ENCODE measurements at regions of chr15 and their contacts with region 1.

Region 1: GRCh38 chr15:66386204-66387123 is at the start of gene MAP2K1:
- DNase-seq: peak; percentile 95
- H3K4me3 ChIP-seq: peak within 1 kb of the TSS; percentile 80 to 98 (median 94)
- H3K27ac ChIP-seq: peak within 1 kb of the TSS; percentile 89
- H3K4me1 ChIP-seq: peaks cover 28% of the 10 kb centered on the region
- H3K27me3 ChIP-seq: no peaks in the 10 kb centered on the region
- CTCF ChIP-seq: peak; percentile 15 to 68
- total RNA-seq, gene MAP2K1: 29.8 to 104 TPM

Region 2: GRCh38 chr15:66293419-66294156 is 92.9 kb before region 1 on chr15 and contains the start of gene DIS3L:
- CTCF ChIA-PET with region 1: no interaction called
- dilution Hi-C with region 1: no loop called
- in situ Hi-C with region 1: no loop called
- intact Hi-C with region 1: loop called (anchors 1 kb)
- DNase-seq: peak; percentile 55
- H3K4me3 ChIP-seq: peak within 1 kb of the TSS; percentile 55 to 86 (median 63)
- H3K27ac ChIP-seq: peak within 1 kb of the TSS; percentile 57
- H3K4me1 ChIP-seq: peaks cover 30% of the 10 kb centered on the region
- H3K27me3 ChIP-seq: no peaks in the 10 kb centered on the region
- CTCF ChIP-seq: no peak
- total RNA-seq, gene DIS3L: 17.7 to 22.1 TPM

Region 3: GRCh38 chr15:66356345-66357236 is 29.9 kb before region 1 on chr15 and contains the start of gene TIPIN:
- CTCF ChIA-PET with region 1: no interaction called
- dilution Hi-C with region 1: no loop called
- in situ Hi-C with region 1: no loop called
- intact Hi-C with region 1: loop called (anchors 2 kb)
- DNase-seq: peak; percentile 92
- H3K4me3 ChIP-seq: peak within 1 kb of the TSS; percentile 62 to 82 (median 63)
- H3K27ac ChIP-seq: peak within 1 kb of the TSS; percentile 78
- H3K4me1 ChIP-seq: peaks cover 9% of the 10 kb centered on the region
- H3K27me3 ChIP-seq: no peaks in the 10 kb centered on the region
- CTCF ChIP-seq: no peak
- total RNA-seq, gene TIPIN: 7.7 to 18.1 TPM

Region 4: DNA sequence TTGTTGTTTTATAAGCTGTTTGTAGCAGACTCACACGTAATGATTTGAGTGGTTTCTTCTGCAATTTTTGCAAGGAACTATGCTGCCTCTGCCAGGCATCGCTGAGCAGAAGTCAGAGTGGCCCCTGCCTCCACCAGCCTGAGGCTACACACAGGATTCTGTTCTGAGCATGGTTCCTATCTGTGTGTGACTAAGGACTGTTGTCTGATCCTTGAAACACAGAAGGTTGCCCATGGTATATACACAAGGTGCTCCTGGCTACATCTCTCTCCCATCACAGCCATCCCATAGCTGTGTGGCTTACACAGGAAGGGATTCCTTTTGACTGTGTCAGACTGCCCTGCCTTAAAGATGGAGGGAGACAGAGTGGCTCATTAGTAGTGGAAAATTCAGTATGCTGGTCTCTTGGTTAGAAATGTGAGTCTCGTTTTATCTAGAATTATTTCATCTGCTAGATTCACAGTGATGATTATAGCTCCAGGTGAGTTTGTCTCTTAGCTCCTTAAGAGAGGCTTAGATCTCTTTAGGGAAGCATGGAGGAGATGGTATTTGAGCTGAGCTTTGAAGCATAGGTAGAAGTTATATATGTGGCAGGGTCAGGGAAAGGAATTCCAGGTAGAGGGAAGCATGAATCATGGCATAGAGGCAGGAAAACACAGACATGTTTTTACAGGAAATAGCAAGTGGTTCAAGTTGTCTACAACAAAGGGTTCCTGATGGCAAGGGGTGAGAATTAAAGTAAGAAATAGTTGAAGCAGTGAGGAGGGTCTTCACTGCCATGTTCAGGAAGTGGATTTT is 73.6 kb after region 1 on chr15:
- CTCF ChIA-PET with region 1: no interaction called
- dilution Hi-C with region 1: no loop called
- in situ Hi-C with region 1: no loop called
- intact Hi-C with region 1: loop called (anchors 1 kb)
- DNase-seq: peak; percentile 83
- H3K4me3 ChIP-seq: peak overlapping the region in 1 of 3 experiments; percentile 17
- H3K27ac ChIP-seq: peak overlapping the region; percentile 96
- H3K4me1 ChIP-seq: peaks cover 45% of the 10 kb centered on the region
- H3K27me3 ChIP-seq: no peaks in the 10 kb centered on the region
- CTCF ChIP-seq: no peak

Region 5: DNA sequence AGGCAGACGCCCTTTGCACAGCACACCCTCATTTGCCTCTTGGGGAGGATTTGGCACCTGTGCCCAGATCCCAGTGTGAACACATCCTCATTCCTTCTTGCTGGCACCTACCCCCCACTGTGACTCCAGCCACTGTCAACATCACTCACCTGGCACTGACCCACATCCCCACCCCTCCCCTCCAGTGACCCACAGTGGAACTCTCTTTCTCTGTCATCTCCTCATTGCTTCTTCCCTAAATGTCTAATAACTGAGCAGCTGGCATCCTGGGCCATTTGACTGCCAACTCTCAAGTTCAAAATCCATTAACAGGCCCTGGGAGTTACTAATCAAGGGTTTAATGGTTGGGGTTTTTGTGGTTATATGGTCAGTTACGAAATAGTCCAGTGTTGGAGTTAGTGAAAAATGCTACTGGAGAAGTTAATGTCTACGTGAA is 96.7 kb after region 1 on chr15:
- CTCF ChIA-PET with region 1: no interaction called
- dilution Hi-C with region 1: no loop called
- in situ Hi-C with region 1: no loop called
- intact Hi-C with region 1: loop called (anchors 1 kb)
- DNase-seq: peak; percentile 80
- H3K4me3 ChIP-seq: no peak overlapping the region
- H3K27ac ChIP-seq: no peak overlapping the region
- H3K4me1 ChIP-seq: peaks cover 33% of the 10 kb centered on the region
- H3K27me3 ChIP-seq: no peaks in the 10 kb centered on the region
- CTCF ChIP-seq: no peak